Activated T-helper 1 cell treated with anti-CD3 and anti-CD28 coated beads, Interleukin-12 subunit alpha, Interleukin-12 subunit beta, Interleukin-2, Interleukin-4 antibody, amounts not matched to agents 30 ng/mL and 10 ng/mL and 1 ng/mL, durations not matched to agents 14 hours and 24 hours and 36 hours (primary cell): ENCODE measurements at regions of chr7 and their contacts with region 1.

Region 1: GRCh38 chr7:144437370-144438191 is 34.1 kb upstream of the NOBOX start:
- DNase-seq: peak; percentile 13
- H3K4me3 Mint-ChIP-seq: no peak overlapping the region
- H3K27ac Mint-ChIP-seq: no peak overlapping the region
- H3K4me1 Mint-ChIP-seq: no peaks in the 10 kb centered on the region
- H3K27me3 Mint-ChIP-seq: peaks cover 2% of the 10 kb centered on the region

Region 2: GRCh38 chr7:143321734-143322133 is 1115.8 kb before region 1 on chr7:
- intact Hi-C with region 1: no loop called
- DNase-seq: no peak
- H3K4me3 Mint-ChIP-seq: no peak overlapping the region
- H3K27ac Mint-ChIP-seq: no peak overlapping the region
- H3K4me1 Mint-ChIP-seq: peaks cover 12% of the 10 kb centered on the region
- H3K27me3 Mint-ChIP-seq: peaks cover 7% of the 10 kb centered on the region

Region 3: DNA sequence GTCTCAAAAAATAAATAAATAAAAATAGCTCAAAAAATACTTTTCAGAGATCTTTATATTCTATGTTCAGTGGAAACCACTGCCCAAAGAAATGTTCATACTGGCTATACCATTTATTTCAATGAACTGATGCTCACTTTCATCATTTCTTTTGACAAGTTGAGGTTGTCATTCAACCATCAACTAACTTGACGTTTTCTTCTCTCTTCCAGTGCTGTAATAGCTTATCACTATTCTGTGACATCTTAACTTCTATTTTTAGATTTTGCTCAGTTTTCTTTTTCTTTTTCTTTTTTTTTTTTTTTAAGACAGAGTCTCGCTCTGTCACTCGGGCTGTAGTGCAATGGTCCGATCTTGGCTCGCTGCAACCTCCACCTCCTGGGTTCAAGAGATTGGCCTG is 263.0 kb before region 1 on chr7:
- intact Hi-C with region 1: loop called (anchors 5 kb)
- DNase-seq: no peak
- H3K4me3 Mint-ChIP-seq: no peak overlapping the region
- H3K27ac Mint-ChIP-seq: no peak overlapping the region
- H3K4me1 Mint-ChIP-seq: no peaks in the 10 kb centered on the region
- H3K27me3 Mint-ChIP-seq: peaks cover 15% of the 10 kb centered on the region